ENCODE measurements at regions of chr19 and their contacts with region 1.

Region 1: DNA sequence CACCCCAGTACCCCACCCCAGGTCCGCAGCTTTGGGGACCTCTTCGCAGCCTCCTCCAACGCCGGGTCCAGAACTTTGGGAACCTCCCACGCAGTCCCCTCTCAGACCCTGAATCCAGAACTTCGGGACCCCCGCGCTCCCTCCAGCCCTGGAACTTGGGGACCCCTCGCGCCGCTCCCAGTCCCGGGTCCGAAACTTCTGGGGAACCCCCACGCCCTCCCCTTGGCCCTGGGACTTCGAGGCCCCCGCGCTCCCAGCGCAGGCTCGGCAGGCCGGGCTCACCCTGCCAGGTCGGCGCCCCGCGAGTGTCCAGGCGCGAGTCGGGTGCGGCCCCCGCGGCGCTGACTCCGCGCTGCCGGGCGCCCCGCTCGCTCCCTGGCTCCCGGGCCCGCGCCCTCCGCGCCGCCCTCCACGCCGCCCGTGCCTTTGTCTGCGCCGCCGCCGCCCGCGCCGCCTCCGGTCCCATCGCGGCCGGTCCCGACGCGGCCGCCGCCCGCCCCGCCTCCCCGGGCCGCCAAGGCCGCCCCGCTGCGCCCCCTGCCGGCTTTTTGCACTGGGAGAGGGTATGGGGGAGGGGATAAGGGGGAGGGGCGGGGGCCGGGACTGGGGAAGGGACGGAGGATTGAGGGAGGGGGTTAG is at the start of gene HOMER3:
- DNase-seq: peak in 34 of 35 experiments; percentile 34 to 83 (median 61)
- ATAC-seq: peak; percentile 92 to 94 (median 94)
- H3K4me3 ChIP-seq: peak within 1 kb of the TSS; percentile 33 to 34
- H3K4me3 Mint-ChIP-seq: peak within 1 kb of the TSS; percentile 65 to 71 (median 66)
- H3K27ac ChIP-seq: no peak within 1 kb of the TSS
- H3K27ac Mint-ChIP-seq: peak within 1 kb of the TSS in 1 of 2 donors; percentile 43
- H3K4me1 ChIP-seq: peaks cover 0 to 22% of the 10 kb centered on the region in 2 experiments
- H3K4me1 Mint-ChIP-seq: peaks cover 5 to 24% (median 9%) of the 10 kb centered on the region in 3 donors
- H3K27me3 ChIP-seq: peaks cover 0 to 51% of the 10 kb centered on the region in 2 experiments
- H3K27me3 Mint-ChIP-seq: peaks cover 24 to 39% of the 10 kb centered on the region in 2 donors
- total RNA-seq, gene HOMER3: 0.93 to 1.9 (median 1.3) TPM

Region 2: GRCh38 chr19:19230999-19231398 is 290.1 kb after region 1 on chr19:
- CTCF ChIA-PET with region 1: no interaction called
- POLR2A ChIA-PET with region 1: interaction called in 1 of 2 experiments, 12 read pairs
- DNase-seq: no peak
- ATAC-seq: no peak
- H3K4me3 ChIP-seq: no peak overlapping the region
- H3K4me3 Mint-ChIP-seq: no peak overlapping the region
- H3K27ac ChIP-seq: no peak overlapping the region
- H3K27ac Mint-ChIP-seq: no peak overlapping the region
- H3K4me1 ChIP-seq: no peaks in the 10 kb centered on the region
- H3K4me1 Mint-ChIP-seq: no peaks in the 10 kb centered on the region
- H3K27me3 ChIP-seq: peaks cover 0 to 43% of the 10 kb centered on the region in 2 experiments
- H3K27me3 Mint-ChIP-seq: peaks cover 16 to 19% of the 10 kb centered on the region in 2 donors